K562 (cell line): ENCODE measurements at regions of chr2 and their contacts with region 1.

Region 1: GRCh38 chr2:231674587-231675338 is 33.6 kb upstream of the PTMA start:
- DNase-seq: peak; percentile 56 to 69 (median 62)
- ATAC-seq: peak; percentile 75
- H3K4me3 ChIP-seq: no peak overlapping the region
- H3K27ac ChIP-seq: peak overlapping the region; percentile 48; the same call in 1 of the 3 replicates
- H3K4me1 ChIP-seq: peaks cover 19 to 43% of the 10 kb centered on the region in 2 experiments
- H3K27me3 ChIP-seq: no peaks in the 10 kb centered on the region
- CTCF ChIP-seq: peak; percentile 70 to 80 (median 76)
- EP300 ChIP-seq: no peak
- POLR2A ChIP-seq: no peak
- RAD21 ChIP-seq: peak; percentile 70 to 75

Region 2: GRCh38 chr2:231563378-231563961 is 111.3 kb before region 1 on chr2:
- CTCF ChIA-PET with region 1: no interaction called
- POLR2A ChIA-PET with region 1: no interaction called
- in situ Hi-C with region 1: no loop called
- intact Hi-C with region 1: loop called (anchors 2 kb)
- DNase-seq: peak; percentile 78 to 81 (median 80)
- ATAC-seq: peak; percentile 98
- H3K4me3 ChIP-seq: no peak overlapping the region
- H3K27ac ChIP-seq: no peak overlapping the region
- H3K4me1 ChIP-seq: no peaks in the 10 kb centered on the region; a peak in 1 of 5 replicates
- H3K27me3 ChIP-seq: no peaks in the 10 kb centered on the region; a peak in 1 of 5 replicates
- CTCF ChIP-seq: peak; percentile 56 to 78 (median 75)
- EP300 ChIP-seq: no peak
- POLR2A ChIP-seq: no peak
- RAD21 ChIP-seq: peak; percentile 19 to 58; a peak in 3 of 4 replicates

Region 3: DNA sequence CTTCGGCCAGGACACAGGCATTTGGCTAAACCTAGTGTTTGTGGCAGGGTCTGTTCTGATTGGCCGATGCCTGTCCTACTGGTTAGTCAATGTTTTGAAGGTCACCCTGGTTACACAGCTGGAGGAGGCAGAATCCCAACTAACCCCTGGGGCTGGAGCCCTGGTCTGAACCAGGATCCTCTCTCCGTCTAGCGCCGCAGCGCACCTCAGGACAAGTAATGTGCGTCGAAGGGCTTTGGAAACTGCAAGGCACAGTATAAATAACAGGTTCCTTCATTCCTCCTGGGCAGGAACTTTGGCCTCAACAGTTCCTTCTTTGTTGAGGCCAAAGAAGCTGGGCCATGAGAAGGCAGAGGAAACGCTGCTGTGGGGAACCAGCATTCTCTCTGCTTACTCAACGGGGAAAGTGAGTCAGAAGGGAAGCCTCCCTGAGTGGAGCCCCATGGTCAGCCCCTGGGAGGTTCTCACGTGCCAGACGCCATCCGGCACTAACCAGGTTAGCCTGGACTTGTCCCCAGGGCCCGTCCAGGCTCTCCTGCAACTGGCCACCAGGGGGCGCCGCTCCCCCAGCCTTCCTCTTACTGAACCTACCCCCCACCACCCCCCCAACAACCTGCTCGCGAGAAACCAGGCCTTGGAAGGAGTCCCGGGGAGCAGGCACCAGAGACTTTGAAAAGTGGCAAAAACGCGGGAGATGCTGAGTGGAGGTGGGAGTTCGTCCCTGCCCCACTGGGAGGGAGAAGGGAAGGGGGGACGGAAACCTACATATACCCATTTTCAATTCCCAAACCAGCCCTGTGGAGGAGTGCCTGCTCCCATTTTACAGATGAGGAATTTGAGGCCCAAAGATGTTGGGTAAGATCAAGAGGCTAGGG is 62.3 kb before region 1 on chr2:
- CTCF ChIA-PET with region 1: interaction called, 10 read pairs
- POLR2A ChIA-PET with region 1: interaction called, 4 read pairs
- in situ Hi-C with region 1: loop called (anchors 5 kb)
- intact Hi-C with region 1: loop called (anchors 1 kb)
- DNase-seq: peak; percentile 87 to 92 (median 88)
- ATAC-seq: peak; percentile 94
- H3K4me3 ChIP-seq: no peak overlapping the region
- H3K27ac ChIP-seq: peak overlapping the region; percentile 46; the same call in 1 of the 3 replicates
- H3K4me1 ChIP-seq: peaks cover 17 to 36% of the 10 kb centered on the region in 2 experiments; a peak in 4 of 5 replicates
- H3K27me3 ChIP-seq: peaks cover 0 to 4% of the 10 kb centered on the region in 2 experiments; a peak in 1 of 5 replicates
- CTCF ChIP-seq: peak; percentile 77 to 86 (median 82)
- EP300 ChIP-seq: no peak
- POLR2A ChIP-seq: no peak
- RAD21 ChIP-seq: peak; percentile 82 to 83

Region 4: DNA sequence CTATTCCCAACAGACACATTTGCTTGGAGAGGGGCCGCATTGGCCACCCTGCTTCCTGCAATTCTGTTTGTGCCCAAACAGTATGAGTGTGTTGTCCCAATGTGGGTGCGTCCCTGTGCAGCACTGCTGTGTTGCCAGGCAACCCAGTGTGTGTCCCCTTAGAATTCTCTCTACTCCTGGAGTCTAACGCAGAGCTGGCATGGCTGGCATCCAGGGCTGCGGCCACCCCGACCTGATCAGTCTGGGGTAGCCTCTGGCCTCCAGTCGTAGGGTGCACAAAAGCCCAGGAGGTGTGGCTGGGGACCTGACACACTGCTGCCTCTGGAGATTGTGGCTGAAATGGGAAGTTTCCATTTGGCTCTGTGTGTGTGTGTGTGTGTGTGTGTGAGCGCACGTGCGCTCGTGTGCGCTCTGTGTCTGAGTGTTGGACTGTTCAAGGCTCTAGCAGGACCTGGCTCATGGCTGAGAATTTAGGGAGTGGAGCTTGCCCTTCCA is 34.1 kb before region 1 on chr2:
- CTCF ChIA-PET with region 1: no interaction called
- POLR2A ChIA-PET with region 1: no interaction called
- in situ Hi-C with region 1: no loop called
- intact Hi-C with region 1: no loop called
- DNase-seq: peak in 3 of 4 experiments; percentile 23 to 41 (median 26)
- ATAC-seq: peak; percentile 56
- H3K4me3 ChIP-seq: no peak overlapping the region
- H3K27ac ChIP-seq: no peak overlapping the region
- H3K4me1 ChIP-seq: peaks cover 6 to 15% of the 10 kb centered on the region in 2 experiments; a peak in 4 of 5 replicates
- H3K27me3 ChIP-seq: no peaks in the 10 kb centered on the region
- CTCF ChIP-seq: no peak
- EP300 ChIP-seq: no peak
- POLR2A ChIP-seq: no peak
- RAD21 ChIP-seq: no peak

Region 5: DNA sequence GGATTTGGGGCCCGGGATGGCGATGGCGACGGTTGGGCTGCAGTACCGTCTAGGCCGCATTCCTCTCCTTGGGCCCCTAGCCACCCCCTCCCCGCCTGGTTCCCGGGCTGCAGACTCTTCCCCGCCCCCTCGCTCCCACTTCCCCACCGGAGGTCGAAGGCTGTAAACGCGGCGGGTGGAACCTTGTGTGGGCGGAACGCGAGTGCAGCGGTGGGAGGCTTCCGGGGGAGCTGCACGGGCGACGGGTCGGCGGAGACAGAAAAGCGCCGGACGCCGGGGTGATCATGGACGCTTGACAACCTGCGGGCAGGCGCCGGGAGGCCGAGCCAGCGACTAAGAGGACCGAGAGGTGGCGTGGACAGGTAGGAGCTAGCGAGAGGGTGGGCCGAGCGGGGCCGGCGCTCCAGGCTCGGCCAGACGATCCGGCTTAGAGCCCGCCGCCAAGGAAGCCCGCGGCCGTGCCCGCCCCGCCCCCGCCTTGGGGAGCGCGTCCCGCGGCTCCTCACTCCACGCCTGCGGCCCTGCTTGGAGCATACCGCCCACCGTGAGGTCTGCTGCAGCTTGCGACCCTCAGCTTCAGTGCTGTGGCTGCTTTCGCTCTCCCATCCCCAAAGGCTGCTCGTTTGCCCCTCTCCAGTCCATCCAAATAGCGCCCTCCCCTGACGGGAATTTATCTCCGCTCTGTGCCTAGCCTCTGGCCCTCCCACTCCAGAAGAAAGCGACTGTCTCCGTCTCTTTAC is 111.6 kb after region 1 on chr2 and contains the start of gene COPS7B:
- CTCF ChIA-PET with region 1: no interaction called
- POLR2A ChIA-PET with region 1: no interaction called
- in situ Hi-C with region 1: no loop called
- intact Hi-C with region 1: loop called (anchors 5 kb)
- DNase-seq: peak; percentile 60 to 85 (median 72)
- ATAC-seq: peak; percentile 88
- H3K4me3 ChIP-seq: peak within 1 kb of the TSS; percentile 99
- H3K27ac ChIP-seq: peak within 1 kb of the TSS; percentile 76
- H3K4me1 ChIP-seq: peaks cover 9 to 13% of the 10 kb centered on the region in 2 experiments; a peak in 3 of 5 replicates
- H3K27me3 ChIP-seq: no peaks in the 10 kb centered on the region
- CTCF ChIP-seq: peak; percentile 55 to 71 (median 65)
- EP300 ChIP-seq: no peak; the same call in 1 of the 2 replicates
- POLR2A ChIP-seq: peak; percentile 67; the same call in 1 of the 2 replicates
- RAD21 ChIP-seq: peak in 1 of 2 experiments; percentile 30; a peak in 1 of 4 replicates
- polyA plus RNA-seq, gene COPS7B: 6.0 to 8.3 TPM